ENCODE measurements at regions of chr5 and their contacts with region 1.

Region 1: GRCh38 chr5:10627160-10627701 is 63.4 kb downstream of the ANKRD33B start:
- DNase-seq: peak; percentile 34
- ATAC-seq: peak; percentile 20
- H3K4me3 Mint-ChIP-seq: peak overlapping the region; percentile 76
- H3K27ac Mint-ChIP-seq: peak overlapping the region; percentile 89
- H3K4me1 Mint-ChIP-seq: peaks cover 34% of the 10 kb centered on the region
- H3K27me3 Mint-ChIP-seq: no peaks in the 10 kb centered on the region; the same call in none of the 2 replicates
- CTCF ChIP-seq: no peak

Region 2: GRCh38 chr5:10424124-10424731 is 203.0 kb before region 1 on chr5:
- CTCF ChIA-PET with region 1: interaction called, 12 read pairs
- POLR2A ChIA-PET with region 1: no interaction called
- DNase-seq: peak; percentile 34
- ATAC-seq: peak; percentile 90
- H3K4me3 Mint-ChIP-seq: no peak overlapping the region
- H3K27ac Mint-ChIP-seq: no peak overlapping the region
- H3K4me1 Mint-ChIP-seq: peaks cover 21% of the 10 kb centered on the region
- H3K27me3 Mint-ChIP-seq: no peaks in the 10 kb centered on the region
- CTCF ChIP-seq: no peak

Region 3: DNA sequence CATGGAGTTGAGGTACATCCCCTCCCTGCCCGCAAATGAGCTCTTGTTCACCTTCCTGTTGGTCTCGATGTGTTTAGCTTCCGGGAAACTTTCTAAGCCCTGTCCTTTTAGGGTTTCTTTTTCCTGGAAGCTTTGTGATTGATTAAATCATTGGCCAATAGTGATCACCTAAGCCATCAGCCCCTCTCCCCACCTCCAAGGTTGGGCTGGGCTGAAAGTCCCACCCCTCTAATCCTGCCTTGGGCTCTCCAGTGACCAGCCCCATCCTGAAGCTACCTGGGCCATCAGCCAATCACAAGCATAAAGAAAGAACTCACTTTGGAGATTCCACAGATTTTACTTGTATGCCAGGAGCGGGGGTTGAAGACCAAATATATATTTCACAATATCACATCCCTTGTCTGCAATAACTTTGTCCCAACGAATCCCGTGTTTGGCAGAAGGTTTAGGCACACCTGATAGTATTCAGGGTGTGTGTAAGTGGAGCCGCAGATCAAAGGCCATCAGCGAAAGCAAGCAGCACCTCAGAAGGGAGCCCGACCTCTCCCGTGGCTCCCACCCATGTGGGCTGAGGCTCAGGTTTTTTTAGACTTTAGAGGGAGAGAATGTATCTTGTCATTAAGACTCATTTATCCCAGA is 165.2 kb before region 1 on chr5:
- CTCF ChIA-PET with region 1: interaction called, 142 read pairs
- POLR2A ChIA-PET with region 1: no interaction called
- DNase-seq: no peak
- ATAC-seq: peak; percentile 90
- H3K4me3 Mint-ChIP-seq: no peak overlapping the region
- H3K27ac Mint-ChIP-seq: no peak overlapping the region
- H3K4me1 Mint-ChIP-seq: peaks cover 25% of the 10 kb centered on the region
- H3K27me3 Mint-ChIP-seq: no peaks in the 10 kb centered on the region
- CTCF ChIP-seq: no peak

Region 4: GRCh38 chr5:10552183-10553143 is 74.8 kb before region 1 on chr5:
- CTCF ChIA-PET with region 1: interaction called, 23 read pairs
- POLR2A ChIA-PET with region 1: interaction called, 10 read pairs
- DNase-seq: no peak
- ATAC-seq: no peak
- H3K4me3 Mint-ChIP-seq: no peak overlapping the region
- H3K27ac Mint-ChIP-seq: peak overlapping the region; percentile 96
- H3K4me1 Mint-ChIP-seq: peaks cover 37% of the 10 kb centered on the region
- H3K27me3 Mint-ChIP-seq: peaks cover 8% of the 10 kb centered on the region
- CTCF ChIP-seq: no peak

Region 5: DNA sequence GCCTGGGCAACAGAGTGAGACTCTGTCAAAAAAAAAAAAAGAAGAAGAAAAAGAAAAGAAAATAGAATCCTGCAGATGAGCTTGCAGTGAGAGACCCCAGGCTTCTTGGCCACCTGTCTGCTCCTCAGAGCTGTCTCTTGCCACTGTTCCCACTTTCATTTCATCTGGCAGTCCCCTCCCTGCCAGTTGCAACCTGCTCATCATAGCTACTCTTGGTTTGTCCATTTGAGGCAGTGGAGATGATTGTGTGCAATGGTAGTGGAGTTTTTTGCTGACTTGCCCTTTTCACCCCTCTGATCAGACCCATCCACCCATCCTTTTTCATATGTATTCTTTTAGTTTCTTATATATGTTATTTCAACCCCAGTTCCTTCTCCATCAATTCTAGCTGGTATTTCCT is 34.6 kb before region 1 on chr5:
- CTCF ChIA-PET with region 1: interaction called, 16 read pairs
- POLR2A ChIA-PET with region 1: no interaction called
- DNase-seq: no peak
- ATAC-seq: no peak
- H3K4me3 Mint-ChIP-seq: no peak overlapping the region
- H3K27ac Mint-ChIP-seq: no peak overlapping the region
- H3K4me1 Mint-ChIP-seq: peaks cover 41% of the 10 kb centered on the region
- H3K27me3 Mint-ChIP-seq: no peaks in the 10 kb centered on the region; the same call in 1 of the 2 replicates
- CTCF ChIP-seq: no peak

Region 6: DNA sequence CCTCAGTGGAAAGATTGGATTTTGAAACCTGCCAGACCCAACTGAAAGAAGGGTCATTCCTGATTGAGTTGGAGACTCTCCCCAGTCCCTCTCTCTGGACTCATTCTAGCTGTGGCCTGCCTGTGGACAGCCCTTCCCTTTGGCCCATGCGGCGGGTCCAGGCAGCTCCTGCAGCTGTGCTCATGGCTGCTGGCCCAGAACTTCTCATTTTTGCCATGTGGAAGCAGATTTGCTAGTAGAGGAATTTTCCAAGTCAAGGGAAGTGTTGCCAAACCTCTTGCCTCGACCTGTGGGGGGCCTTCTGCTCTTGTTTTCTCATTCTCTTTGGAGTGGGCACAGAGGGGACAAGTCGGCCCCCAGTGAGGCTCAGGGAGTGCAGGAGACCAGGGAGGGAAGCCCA is 25.8 kb after region 1 on chr5:
- CTCF ChIA-PET with region 1: interaction called, 11 read pairs
- POLR2A ChIA-PET with region 1: no interaction called
- DNase-seq: no peak
- ATAC-seq: no peak
- H3K4me3 Mint-ChIP-seq: no peak overlapping the region
- H3K27ac Mint-ChIP-seq: no peak overlapping the region
- H3K4me1 Mint-ChIP-seq: peaks cover 12% of the 10 kb centered on the region
- H3K27me3 Mint-ChIP-seq: no peaks in the 10 kb centered on the region
- CTCF ChIP-seq: no peak

Region 7: GRCh38 chr5:10707198-10708142 is 80.2 kb after region 1 on chr5:
- CTCF ChIA-PET with region 1: no interaction called
- POLR2A ChIA-PET with region 1: no interaction called
- DNase-seq: no peak
- ATAC-seq: no peak
- H3K4me3 Mint-ChIP-seq: no peak overlapping the region
- H3K27ac Mint-ChIP-seq: no peak overlapping the region
- H3K4me1 Mint-ChIP-seq: peaks cover 45% of the 10 kb centered on the region
- H3K27me3 Mint-ChIP-seq: no peaks in the 10 kb centered on the region
- CTCF ChIP-seq: no peak

Region 8: GRCh38 chr5:10921160-10921559 is 293.9 kb after region 1 on chr5:
- CTCF ChIA-PET with region 1: no interaction called
- POLR2A ChIA-PET with region 1: no interaction called
- DNase-seq: no peak
- ATAC-seq: no peak
- H3K4me3 Mint-ChIP-seq: no peak overlapping the region
- H3K27ac Mint-ChIP-seq: no peak overlapping the region
- H3K4me1 Mint-ChIP-seq: peaks cover 14% of the 10 kb centered on the region
- H3K27me3 Mint-ChIP-seq: no peaks in the 10 kb centered on the region; the same call in 1 of the 2 replicates
- CTCF ChIP-seq: no peak

Measured in WTC11 (cell line).